ENCODE measurements at regions of chr3 and their contacts with region 1.

Region 1: DNA sequence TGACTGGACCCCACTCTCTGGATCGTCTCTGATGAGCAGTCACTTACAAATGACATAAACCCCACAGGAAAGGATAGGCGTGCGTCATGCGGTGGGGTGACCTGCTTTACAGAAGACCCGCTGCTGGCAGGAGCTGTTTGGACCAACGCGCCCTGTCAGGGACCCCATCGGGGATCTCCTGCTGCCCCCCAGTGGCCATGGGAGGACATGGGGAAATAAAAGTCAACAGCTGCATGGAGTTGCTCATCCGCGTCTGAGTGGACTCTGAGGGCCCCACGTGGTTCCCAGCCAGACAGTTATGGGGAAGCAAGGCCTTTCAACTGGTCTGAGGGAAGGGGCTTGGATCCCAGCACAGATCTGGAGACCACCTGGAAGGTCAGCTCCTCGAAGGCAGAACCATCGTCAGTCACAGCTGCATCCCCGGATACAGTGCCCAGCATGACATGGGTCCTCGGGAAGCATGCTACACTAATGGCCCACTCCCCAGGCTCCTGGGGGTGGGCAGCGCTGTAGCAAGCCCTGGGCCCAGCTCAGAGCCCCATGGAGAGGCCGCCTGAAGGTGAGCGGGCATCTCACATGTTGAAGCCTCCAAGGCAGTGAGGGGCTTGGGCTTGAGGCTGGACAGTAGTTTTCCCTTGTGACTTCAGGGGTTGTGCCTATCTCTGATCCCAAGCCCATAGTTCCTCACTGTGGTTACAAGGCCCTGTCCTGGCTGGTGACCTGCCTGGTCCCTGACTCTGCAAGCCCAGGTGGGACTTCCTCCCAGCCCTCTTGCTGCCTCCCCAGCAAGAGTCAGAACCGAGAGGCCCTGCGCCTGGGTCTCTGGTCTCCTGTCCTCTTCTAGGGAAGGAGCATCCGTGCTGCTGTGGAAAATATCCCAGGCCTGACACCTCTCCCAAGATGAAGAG is 32.3 kb downstream of the PTH1R start:
- DNase-seq: peak; percentile 80
- H3K4me3 Mint-ChIP-seq: no peak overlapping the region
- H3K27ac Mint-ChIP-seq: no peak overlapping the region
- H3K4me1 Mint-ChIP-seq: peaks cover 14% of the 10 kb centered on the region
- H3K27me3 Mint-ChIP-seq: no peaks in the 10 kb centered on the region

Region 2: GRCh38 chr3:46895204-46895660 is 14.6 kb before region 1 on chr3:
- CTCF ChIA-PET with region 1: interaction called, 10 read pairs
- POLR2A ChIA-PET with region 1: no interaction called
- DNase-seq: peak; percentile 79
- H3K4me3 Mint-ChIP-seq: no peak overlapping the region
- H3K27ac Mint-ChIP-seq: no peak overlapping the region
- H3K4me1 Mint-ChIP-seq: peaks cover 18% of the 10 kb centered on the region
- H3K27me3 Mint-ChIP-seq: peaks cover 55% of the 10 kb centered on the region